Panc1 (cell line): ENCODE measurements at regions of chr7 and their contacts with region 1.

Region 1: DNA sequence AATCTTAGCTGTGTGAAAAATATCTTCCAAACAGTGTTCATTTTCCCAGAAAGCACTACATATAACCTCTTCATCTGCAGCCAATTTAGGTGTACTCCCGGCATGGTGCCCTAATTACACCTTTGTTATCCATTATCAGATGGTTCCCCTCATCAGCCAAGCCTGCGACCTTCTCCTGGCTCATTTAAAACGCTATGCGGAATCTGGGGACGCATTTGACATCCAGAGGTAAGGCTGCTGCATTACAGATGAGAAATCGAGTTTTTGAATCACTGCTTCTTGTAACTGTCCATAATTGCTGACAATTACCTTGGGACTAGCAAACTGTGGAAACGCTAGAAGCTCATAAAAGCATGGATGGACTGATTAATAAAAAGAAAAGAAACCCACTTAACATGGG is 109.5 kb downstream of the PARP12 start:
- DNase-seq: no peak
- ATAC-seq: no peak
- H3K4me3 ChIP-seq: no peak overlapping the region
- H3K27ac ChIP-seq: no peak overlapping the region
- H3K4me1 ChIP-seq: no peaks in the 10 kb centered on the region; the same call in 1 of the 2 replicates
- H3K27me3 ChIP-seq: no peaks in the 10 kb centered on the region
- CTCF ChIP-seq: no peak

Region 2: DNA sequence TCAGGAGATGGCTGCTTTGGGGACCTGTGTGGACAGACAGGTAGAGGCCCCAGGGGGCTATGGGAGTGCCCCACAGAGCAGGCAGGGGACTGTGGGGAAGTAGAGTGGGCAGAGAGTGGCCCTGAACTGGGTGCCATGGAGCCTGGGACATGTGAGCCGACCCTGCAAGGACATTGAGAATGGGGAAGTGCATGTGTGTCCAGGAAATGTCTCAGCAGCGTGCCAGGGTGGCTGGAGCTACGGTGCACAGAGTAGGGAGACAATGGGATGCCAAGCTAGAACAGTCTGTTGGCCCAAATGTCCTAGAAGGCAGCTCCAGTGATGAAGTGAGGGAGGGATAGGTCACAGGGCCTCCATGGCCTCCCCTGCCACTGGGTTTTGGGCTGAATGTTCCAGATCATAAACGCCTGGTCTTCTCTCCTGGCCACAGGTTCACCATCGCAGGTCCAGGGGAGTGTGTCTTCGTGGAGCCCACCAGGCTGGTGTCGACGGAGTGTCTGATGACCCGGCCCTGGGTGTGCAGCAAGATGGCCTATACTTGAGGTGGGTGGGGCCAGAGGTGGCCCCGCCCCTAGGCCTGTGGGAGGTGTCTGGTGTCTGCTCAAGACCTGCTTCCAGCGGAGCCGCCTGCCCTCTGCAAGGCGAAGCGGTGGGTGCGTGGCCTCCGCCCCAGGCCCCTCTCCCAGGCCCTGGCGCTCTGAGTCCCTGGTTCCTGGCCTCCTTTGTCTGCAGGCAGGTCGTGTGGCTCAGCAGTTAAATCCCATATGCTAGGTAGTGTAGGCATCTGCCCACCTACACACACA is 409.2 kb before region 1 on chr7:
- CTCF ChIA-PET with region 1: no interaction called
- POLR2A ChIA-PET with region 1: no interaction called
- in situ Hi-C with region 1: no loop called
- intact Hi-C with region 1: no loop called
- DNase-seq: no peak
- ATAC-seq: peak; percentile 46
- H3K4me3 ChIP-seq: no peak overlapping the region
- H3K27ac ChIP-seq: no peak overlapping the region
- H3K4me1 ChIP-seq: no peaks in the 10 kb centered on the region
- H3K27me3 ChIP-seq: no peaks in the 10 kb centered on the region
- CTCF ChIP-seq: no peak

Region 3: GRCh38 chr7:139940866-139941265 is 12.4 kb before region 1 on chr7:
- CTCF ChIA-PET with region 1: no interaction called
- POLR2A ChIA-PET with region 1: no interaction called
- in situ Hi-C with region 1: no loop called
- intact Hi-C with region 1: no loop called
- DNase-seq: no peak
- ATAC-seq: no peak
- H3K4me3 ChIP-seq: no peak overlapping the region
- H3K27ac ChIP-seq: no peak overlapping the region
- H3K4me1 ChIP-seq: no peaks in the 10 kb centered on the region
- H3K27me3 ChIP-seq: no peaks in the 10 kb centered on the region
- CTCF ChIP-seq: no peak

Region 4: DNA sequence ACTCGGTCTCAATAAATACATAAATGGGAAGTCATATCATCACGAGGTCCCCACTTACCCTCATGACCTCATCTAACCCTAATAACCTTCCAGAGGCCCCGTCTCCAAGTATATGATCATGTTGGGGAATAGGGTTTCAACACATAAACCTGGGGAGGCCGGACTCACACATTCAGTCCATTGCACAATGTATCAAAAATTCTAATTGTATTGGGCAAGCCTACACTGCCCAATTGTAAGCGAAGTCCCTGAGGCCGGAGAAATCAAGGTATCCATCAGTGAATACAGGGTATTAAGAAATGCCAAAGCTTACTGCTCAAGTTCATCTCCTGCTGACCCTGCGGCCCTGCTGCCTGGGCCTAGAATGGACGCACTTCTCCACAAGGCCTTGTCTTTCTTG is 39.9 kb after region 1 on chr7:
- CTCF ChIA-PET with region 1: interaction called, 13 read pairs
- POLR2A ChIA-PET with region 1: no interaction called
- in situ Hi-C with region 1: no loop called
- intact Hi-C with region 1: no loop called
- DNase-seq: no peak
- ATAC-seq: no peak
- H3K4me3 ChIP-seq: no peak overlapping the region
- H3K27ac ChIP-seq: no peak overlapping the region
- H3K4me1 ChIP-seq: no peaks in the 10 kb centered on the region
- H3K27me3 ChIP-seq: no peaks in the 10 kb centered on the region
- CTCF ChIP-seq: no peak